ENCODE measurements at regions of chr1 and their contacts with region 1.

Region 1: GRCh38 chr1:168082008-168082876 is 54.5 kb downstream of the GPR161 start:
- DNase-seq: peak; percentile 85 to 87
- H3K4me3 ChIP-seq: no peak overlapping the region
- H3K4me3 Mint-ChIP-seq: peak overlapping the region; percentile 25
- H3K27ac Mint-ChIP-seq: peak overlapping the region; percentile 62
- H3K4me1 ChIP-seq: peaks cover 38% of the 10 kb centered on the region
- H3K4me1 Mint-ChIP-seq: peaks cover 41% of the 10 kb centered on the region
- H3K27me3 ChIP-seq: no peaks in the 10 kb centered on the region
- H3K27me3 Mint-ChIP-seq: no peaks in the 10 kb centered on the region
- CTCF ChIP-seq: peak; percentile 90 to 92

Region 2: GRCh38 chr1:167721617-167722151 is 360.6 kb before region 1 on chr1 and contains the start of gene MPZL1:
- CTCF ChIA-PET with region 1: no interaction called
- POLR2A ChIA-PET with region 1: no interaction called
- intact Hi-C with region 1: loop called (anchors 2 kb)
- DNase-seq: peak; percentile 96 to 98
- H3K4me3 ChIP-seq: peak within 1 kb of the TSS; percentile 81
- H3K4me3 Mint-ChIP-seq: peak within 1 kb of the TSS; percentile 67
- H3K27ac Mint-ChIP-seq: peak within 1 kb of the TSS; percentile 85
- H3K4me1 ChIP-seq: peaks cover 63% of the 10 kb centered on the region
- H3K4me1 Mint-ChIP-seq: peaks cover 55% of the 10 kb centered on the region
- H3K27me3 ChIP-seq: no peaks in the 10 kb centered on the region
- H3K27me3 Mint-ChIP-seq: no peaks in the 10 kb centered on the region
- CTCF ChIP-seq: no peak
- total RNA-seq, gene MPZL1: 273 and 280 TPM in 2 replicates

Region 3: GRCh38 chr1:167936068-167936929 is 145.9 kb before region 1 on chr1 and contains the start of gene DCAF6:
- CTCF ChIA-PET with region 1: interaction called, 15 read pairs
- POLR2A ChIA-PET with region 1: interaction called, 3 read pairs
- intact Hi-C with region 1: loop called (anchors 5 kb)
- DNase-seq: peak; percentile 98
- H3K4me3 ChIP-seq: peak within 1 kb of the TSS; percentile 66
- H3K4me3 Mint-ChIP-seq: peak within 1 kb of the TSS; percentile 82
- H3K27ac Mint-ChIP-seq: peak within 1 kb of the TSS; percentile 86
- H3K4me1 ChIP-seq: peaks cover 15% of the 10 kb centered on the region; the same call in 1 of the 2 replicates
- H3K4me1 Mint-ChIP-seq: peaks cover 6% of the 10 kb centered on the region
- H3K27me3 ChIP-seq: no peaks in the 10 kb centered on the region
- H3K27me3 Mint-ChIP-seq: no peaks in the 10 kb centered on the region
- CTCF ChIP-seq: no peak
- total RNA-seq, gene DCAF6: 41.9 and 53.0 TPM in 2 replicates

Region 4: DNA sequence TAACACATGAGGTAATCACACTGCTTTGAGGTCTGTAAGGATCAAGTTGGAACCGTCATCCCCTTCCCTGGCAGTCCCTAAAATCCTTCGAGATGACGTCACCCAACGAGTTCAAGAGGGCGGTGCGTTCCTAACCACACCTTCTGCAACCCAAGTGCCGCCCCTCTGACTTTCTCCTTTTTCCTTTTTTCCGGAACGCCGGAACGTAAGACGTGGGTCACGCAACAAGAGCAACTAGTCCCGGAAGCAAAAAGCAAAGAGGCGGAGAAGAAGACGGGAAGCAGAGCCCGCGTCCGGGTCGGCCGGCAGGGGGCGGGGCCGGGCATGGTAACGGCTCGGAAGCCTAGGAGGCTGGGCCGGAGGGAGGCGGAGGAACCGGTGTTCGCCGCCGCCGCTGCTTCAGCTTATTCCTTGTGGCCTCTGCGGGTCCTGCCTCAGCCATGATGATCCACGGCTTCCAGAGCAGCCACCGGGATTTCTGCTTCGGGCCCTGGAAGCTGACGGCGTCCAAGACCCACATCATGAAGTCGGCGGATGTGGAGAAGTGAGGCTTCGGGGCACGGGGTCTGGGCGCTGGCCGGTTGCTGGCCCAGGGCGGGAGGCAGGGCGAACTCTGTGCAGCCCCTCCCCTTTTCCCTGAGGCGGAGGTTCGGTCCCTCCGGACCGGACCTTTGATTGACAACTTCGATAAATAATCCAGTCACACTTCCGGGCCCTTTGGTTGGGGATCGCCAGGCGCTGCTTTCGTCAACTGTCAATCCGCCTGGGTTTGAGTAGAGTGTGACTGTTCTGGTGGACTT is 96.6 kb after region 1 on chr1 and contains the start of gene TIPRL:
- CTCF ChIA-PET with region 1: no interaction called
- POLR2A ChIA-PET with region 1: no interaction called
- intact Hi-C with region 1: no loop called
- DNase-seq: peak; percentile 97 to 98
- H3K4me3 ChIP-seq: peak within 1 kb of the TSS; percentile 91
- H3K4me3 Mint-ChIP-seq: no peak within 1 kb of the TSS
- H3K27ac Mint-ChIP-seq: no peak within 1 kb of the TSS
- H3K4me1 ChIP-seq: peaks cover 5% of the 10 kb centered on the region; the same call in 1 of the 2 replicates
- H3K4me1 Mint-ChIP-seq: peaks cover 3% of the 10 kb centered on the region
- H3K27me3 ChIP-seq: no peaks in the 10 kb centered on the region
- H3K27me3 Mint-ChIP-seq: no peaks in the 10 kb centered on the region
- CTCF ChIP-seq: peak; percentile 81 to 85
- total RNA-seq, gene TIPRL: 35.7 and 38.1 TPM in 2 replicates

Region 5: DNA sequence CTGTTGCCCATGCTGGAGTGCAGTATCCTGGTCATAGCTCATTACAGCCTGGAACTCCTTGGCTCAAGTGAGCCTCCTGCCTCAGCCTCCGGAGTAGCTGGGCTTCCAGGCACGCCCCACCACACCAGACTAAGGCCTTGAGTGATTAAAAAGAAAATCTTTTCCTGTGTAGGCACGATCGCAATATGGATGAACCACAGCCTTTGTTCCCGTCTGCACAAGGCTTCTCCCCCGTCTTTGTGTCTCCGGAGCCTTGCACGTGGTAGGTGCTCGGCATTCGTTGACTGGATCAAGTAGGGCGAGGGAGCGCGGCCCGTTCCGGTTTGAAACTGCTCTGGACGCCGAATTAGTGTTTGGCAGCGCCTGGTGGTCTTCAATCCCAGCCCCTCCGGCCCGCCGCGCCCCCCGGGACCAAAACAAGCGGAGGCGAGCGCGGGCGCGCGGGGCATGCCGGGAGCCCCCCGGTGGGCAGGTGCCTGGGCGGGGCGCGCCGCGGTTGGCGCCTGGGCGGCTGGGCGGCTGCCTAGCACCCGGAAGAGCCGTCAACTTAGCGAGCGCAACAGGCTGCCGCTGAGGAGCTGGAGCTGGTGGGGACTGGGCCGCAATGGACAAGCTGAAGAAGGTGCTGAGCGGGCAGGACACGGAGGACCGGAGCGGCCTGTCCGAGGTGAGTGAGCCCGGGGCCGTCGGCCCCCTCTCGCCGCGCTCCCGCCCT is 143.4 kb after region 1 on chr1 and contains the start of gene SFT2D2:
- CTCF ChIA-PET with region 1: no interaction called
- POLR2A ChIA-PET with region 1: interaction called, 9 read pairs
- intact Hi-C with region 1: loop called (anchors 5 kb)
- DNase-seq: peak; percentile 74 to 88
- H3K4me3 ChIP-seq: peak within 1 kb of the TSS; percentile 93
- H3K4me3 Mint-ChIP-seq: peak within 1 kb of the TSS; percentile 92
- H3K27ac Mint-ChIP-seq: peak within 1 kb of the TSS; percentile 89
- H3K4me1 ChIP-seq: peaks cover 19% of the 10 kb centered on the region
- H3K4me1 Mint-ChIP-seq: peaks cover 23% of the 10 kb centered on the region
- H3K27me3 ChIP-seq: no peaks in the 10 kb centered on the region
- H3K27me3 Mint-ChIP-seq: no peaks in the 10 kb centered on the region
- CTCF ChIP-seq: no peak
- total RNA-seq, gene SFT2D2: 58.7 and 59.3 TPM in 2 replicates

Measured in Caco-2 (cell line).